Ovary (tissue), 10 donors: ENCODE measurements at regions of chr6 and their contacts with region 1.

Region 1: DNA sequence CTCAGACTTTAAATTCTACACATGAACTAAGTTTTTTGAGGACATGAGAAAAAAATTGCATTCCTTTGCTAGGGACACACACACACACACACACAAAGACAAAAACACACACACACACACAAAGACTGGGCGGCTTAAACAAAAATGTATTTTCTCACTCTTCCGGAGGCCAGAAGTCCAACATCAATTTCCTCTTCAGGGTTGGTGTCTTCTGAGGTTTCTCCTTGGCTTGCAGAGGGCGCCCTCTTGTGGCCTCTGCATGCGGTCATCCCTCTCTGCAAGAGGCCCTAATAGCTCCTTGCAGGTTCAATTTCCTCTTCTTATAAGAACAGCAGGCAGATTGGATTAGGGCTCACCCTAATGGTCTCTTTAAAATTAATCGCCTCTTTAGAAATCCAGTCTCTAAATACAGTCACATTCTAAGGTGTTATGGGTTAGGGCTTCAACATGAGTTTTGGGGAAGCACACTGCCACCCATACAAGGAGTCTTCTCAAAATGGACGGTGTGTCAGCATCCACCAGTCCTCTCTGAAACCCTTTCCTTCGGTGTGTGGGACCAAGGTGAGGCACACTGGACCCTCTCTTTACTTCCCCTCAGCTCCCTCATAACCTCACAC is 61.4 kb downstream of the GPR6 start:
- DNase-seq: peak; percentile 79 to 92 (median 87)
- H3K4me3 ChIP-seq: peak overlapping the region; percentile 7
- H3K27ac ChIP-seq: peak overlapping the region in 1 of 2 donors; percentile 9
- H3K4me1 ChIP-seq: no peaks in the 10 kb centered on the region
- H3K27me3 ChIP-seq: no peaks in the 10 kb centered on the region
- CTCF ChIP-seq: peak; percentile 71 to 78 (median 78)
- EP300 ChIP-seq: no peak
- POLR2A ChIP-seq: no peak

Region 2: DNA sequence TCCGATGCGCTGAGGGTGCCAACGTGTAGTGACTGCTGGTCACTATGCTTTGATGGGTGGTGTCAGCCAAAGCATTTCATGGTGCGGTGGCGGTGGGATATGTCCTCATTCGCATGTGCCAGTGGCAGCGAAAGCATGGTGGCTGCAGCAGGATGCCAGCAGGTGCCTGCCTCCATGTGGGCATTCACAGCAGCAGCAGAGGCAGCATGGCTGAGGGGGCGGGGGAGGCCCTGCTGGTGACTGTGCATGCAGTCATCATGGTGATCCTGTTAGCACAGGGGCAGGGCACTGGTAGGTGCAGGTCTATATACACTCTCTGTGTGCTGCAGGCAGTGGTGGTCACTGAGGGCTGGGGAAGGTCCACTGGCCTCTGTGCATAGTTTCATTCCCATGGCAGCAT is 326.4 kb before region 1 on chr6:
- intact Hi-C with region 1: loop called in 3 of 4 experiments (anchors 5 kb)
- DNase-seq: no peak
- H3K4me3 ChIP-seq: no peak overlapping the region
- H3K27ac ChIP-seq: no peak overlapping the region
- H3K4me1 ChIP-seq: peaks cover 2% of the 10 kb centered on the region
- H3K27me3 ChIP-seq: no peaks in the 10 kb centered on the region
- CTCF ChIP-seq: no peak
- EP300 ChIP-seq: no peak
- POLR2A ChIP-seq: no peak

Region 3: GRCh38 chr6:109892436-109893435 is 146.7 kb before region 1 on chr6:
- intact Hi-C with region 1: loop called in 1 of 4 experiments (anchors 10 kb)
- DNase-seq: no peak
- H3K4me3 ChIP-seq: no peak overlapping the region
- H3K27ac ChIP-seq: no peak overlapping the region
- H3K4me1 ChIP-seq: no peaks in the 10 kb centered on the region
- H3K27me3 ChIP-seq: no peaks in the 10 kb centered on the region
- CTCF ChIP-seq: no peak
- EP300 ChIP-seq: no peak
- POLR2A ChIP-seq: no peak

Region 4: DNA sequence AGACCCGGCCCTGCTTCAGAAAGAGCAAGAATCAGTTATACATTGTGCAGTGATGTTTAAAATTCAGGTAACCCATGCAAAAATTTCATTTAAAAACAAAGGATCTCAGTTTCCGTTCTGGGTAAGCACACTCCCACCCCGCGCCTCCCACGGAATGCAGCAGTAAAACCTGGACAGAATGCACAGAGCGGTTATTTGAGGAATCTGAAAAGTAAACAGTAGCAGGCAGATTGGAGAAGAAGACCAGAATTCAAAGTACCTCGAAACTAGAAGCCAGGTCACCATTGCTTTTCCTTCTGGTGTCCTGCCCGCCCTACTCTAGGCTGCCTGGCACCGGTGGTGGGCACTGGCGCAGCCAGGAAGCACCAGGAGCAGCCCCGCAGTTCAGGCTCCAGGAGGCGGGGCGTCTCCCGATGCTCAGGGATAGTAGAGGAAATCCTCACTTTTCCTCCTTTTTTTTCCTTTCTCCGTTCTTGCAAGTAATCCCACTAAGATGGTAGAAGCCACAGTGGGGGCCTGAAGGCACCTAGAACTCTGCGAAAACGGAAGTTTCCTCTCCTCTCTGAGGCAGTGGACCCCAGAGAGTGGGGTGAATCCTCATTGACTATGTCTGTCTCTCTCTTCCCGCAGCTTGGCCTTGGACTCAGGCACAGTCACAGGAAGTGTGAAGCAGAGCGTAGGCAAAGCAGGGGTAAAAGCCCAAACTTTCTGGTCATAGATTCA is 290.4 kb after region 1 on chr6:
- intact Hi-C with region 1: no loop called
- DNase-seq: peak in 3 of 5 donors; percentile 54 to 56 (median 56)
- H3K4me3 ChIP-seq: peak overlapping the region; percentile 35
- H3K27ac ChIP-seq: peak overlapping the region in 1 of 2 donors; percentile 80
- H3K4me1 ChIP-seq: peaks cover 20% of the 10 kb centered on the region
- H3K27me3 ChIP-seq: no peaks in the 10 kb centered on the region
- CTCF ChIP-seq: no peak
- EP300 ChIP-seq: no peak
- POLR2A ChIP-seq: no peak

Region 5: DNA sequence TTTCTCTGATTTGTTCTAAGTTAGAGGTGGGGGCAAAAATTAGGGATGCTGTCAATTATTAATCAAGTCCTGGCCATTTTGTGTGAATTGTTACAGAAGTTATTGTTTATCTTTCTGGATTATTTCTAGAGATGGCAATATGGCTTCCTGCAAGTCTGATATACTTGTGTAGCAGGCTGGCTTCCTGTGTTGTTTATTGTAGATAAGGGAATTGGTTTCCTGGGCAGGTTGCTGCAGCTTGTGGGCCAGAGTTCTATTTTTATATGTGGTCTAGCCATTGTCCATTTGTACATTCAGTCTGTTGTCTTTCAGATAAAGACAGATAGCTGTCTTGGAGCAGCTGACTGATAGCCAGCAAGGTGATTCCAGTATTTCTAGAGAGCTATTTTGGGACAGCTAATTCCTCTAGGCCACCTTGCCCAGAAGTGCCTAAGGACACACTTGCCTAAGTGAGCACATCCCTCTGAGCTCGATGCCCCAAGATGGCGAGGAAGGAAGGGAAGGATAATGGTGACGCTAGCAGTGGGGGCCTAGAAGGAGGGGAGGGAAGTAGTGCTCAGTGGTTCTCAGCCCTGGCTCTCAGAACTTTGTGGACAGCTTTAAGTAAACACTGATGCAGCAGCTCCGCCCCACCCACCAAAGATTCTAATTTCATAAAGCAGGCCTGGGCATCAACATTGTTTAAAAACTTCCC is 350.4 kb after region 1 on chr6:
- intact Hi-C with region 1: loop called in 1 of 4 experiments (anchors 2 kb)
- DNase-seq: no peak
- H3K4me3 ChIP-seq: no peak overlapping the region
- H3K27ac ChIP-seq: no peak overlapping the region
- H3K4me1 ChIP-seq: peaks cover 3% of the 10 kb centered on the region
- H3K27me3 ChIP-seq: no peaks in the 10 kb centered on the region
- CTCF ChIP-seq: no peak
- EP300 ChIP-seq: no peak
- POLR2A ChIP-seq: no peak